H1 (cell line): ENCODE measurements at regions of chr14 and their contacts with region 1.

Region 1: GRCh38 chr14:72023722-72024407 is 91.6 kb downstream of the RGS6 start:
- DNase-seq: peak; percentile 7 to 60
- H3K4me3 ChIP-seq: no peak overlapping the region
- H3K27ac ChIP-seq: no peak overlapping the region
- H3K4me1 ChIP-seq: peaks cover 0 to 6% (median 2%) of the 10 kb centered on the region in 4 experiments; a peak in 4 of 7 replicates
- H3K27me3 ChIP-seq: no peaks in the 10 kb centered on the region
- CTCF ChIP-seq: peak in 2 of 3 experiments; percentile 58 to 73; a peak in 3 of 4 replicates
- EP300 ChIP-seq: no peak
- POLR2A ChIP-seq: no peak
- RAD21 ChIP-seq: peak; percentile 63 to 79

Region 2: DNA sequence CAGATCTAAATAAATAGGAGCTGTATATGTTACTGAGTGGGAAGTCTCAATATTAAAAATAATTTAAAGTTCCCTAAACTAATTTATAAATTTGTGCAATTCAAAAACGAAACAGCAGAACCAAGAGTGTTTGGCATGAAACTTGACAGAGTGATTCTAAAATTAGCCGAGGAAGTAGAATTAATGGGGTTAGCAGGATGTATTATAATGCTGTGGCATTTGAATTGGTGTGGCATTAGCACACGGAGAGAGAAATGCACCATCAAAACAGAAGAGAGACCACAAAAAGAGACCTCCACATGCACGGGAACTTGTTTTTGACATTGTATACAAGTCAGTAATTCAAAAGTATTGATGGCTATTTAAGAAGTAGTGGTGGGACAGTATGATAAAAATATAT is 457.6 kb before region 1 on chr14:
- CTCF ChIA-PET with region 1: no interaction called
- POLR2A ChIA-PET with region 1: no interaction called
- DNase-seq: no peak
- H3K4me3 ChIP-seq: no peak overlapping the region
- H3K27ac ChIP-seq: no peak overlapping the region
- H3K4me1 ChIP-seq: peaks cover 0 to 5% (median 2%) of the 10 kb centered on the region in 4 experiments; a peak in 3 of 7 replicates
- H3K27me3 ChIP-seq: no peaks in the 10 kb centered on the region
- CTCF ChIP-seq: no peak
- EP300 ChIP-seq: no peak
- POLR2A ChIP-seq: no peak
- RAD21 ChIP-seq: no peak

Region 3: DNA sequence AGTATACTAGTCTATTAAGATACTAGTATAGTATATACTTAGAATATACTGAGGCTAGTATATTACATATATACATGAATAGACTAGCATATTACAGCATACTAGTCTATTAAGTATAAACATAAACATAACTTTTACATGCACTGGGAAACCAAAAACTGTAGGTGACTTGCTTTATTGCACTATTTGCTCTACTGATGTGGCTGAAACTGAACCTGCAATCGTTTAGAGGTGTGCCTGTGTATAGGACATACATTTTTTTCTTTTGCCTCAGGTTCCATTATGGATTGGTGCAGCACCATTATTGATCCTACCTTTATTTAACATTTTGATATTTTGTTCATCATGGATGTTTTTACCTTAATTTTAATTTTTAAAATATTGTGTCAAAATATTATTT is 234.9 kb before region 1 on chr14:
- CTCF ChIA-PET with region 1: no interaction called
- POLR2A ChIA-PET with region 1: no interaction called
- DNase-seq: no peak
- H3K4me3 ChIP-seq: no peak overlapping the region
- H3K27ac ChIP-seq: no peak overlapping the region
- H3K4me1 ChIP-seq: no peaks in the 10 kb centered on the region
- H3K27me3 ChIP-seq: no peaks in the 10 kb centered on the region
- CTCF ChIP-seq: no peak
- EP300 ChIP-seq: no peak
- POLR2A ChIP-seq: no peak
- RAD21 ChIP-seq: no peak

Region 4: DNA sequence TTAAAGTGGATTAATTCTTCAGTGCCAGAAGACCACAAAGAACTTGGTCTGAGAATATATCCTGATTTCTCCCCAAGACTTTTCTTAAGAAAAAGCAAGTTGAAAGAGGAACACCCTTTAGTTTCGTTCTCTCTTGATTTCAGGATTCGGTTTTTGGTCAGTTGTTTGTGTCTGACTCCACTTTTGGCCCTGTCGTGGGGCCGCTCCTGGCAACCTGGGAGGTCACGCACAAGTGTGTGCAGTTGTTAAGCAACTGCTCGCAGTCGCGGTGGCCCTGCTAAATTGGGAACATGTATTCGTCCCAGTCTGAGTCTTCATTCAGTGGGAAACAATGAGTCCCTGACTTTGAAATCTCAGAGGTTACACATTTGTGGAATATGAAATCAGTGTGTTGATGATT is 23.0 kb before region 1 on chr14:
- CTCF ChIA-PET with region 1: interaction called, 15 read pairs
- POLR2A ChIA-PET with region 1: no interaction called
- DNase-seq: no peak
- H3K4me3 ChIP-seq: no peak overlapping the region
- H3K27ac ChIP-seq: no peak overlapping the region
- H3K4me1 ChIP-seq: no peaks in the 10 kb centered on the region
- H3K27me3 ChIP-seq: no peaks in the 10 kb centered on the region
- CTCF ChIP-seq: no peak
- EP300 ChIP-seq: no peak
- POLR2A ChIP-seq: no peak
- RAD21 ChIP-seq: no peak

Region 5: GRCh38 chr14:72008666-72009065 is 15.2 kb before region 1 on chr14:
- CTCF ChIA-PET with region 1: interaction called, 15 read pairs
- POLR2A ChIA-PET with region 1: no interaction called
- DNase-seq: no peak
- H3K4me3 ChIP-seq: no peak overlapping the region
- H3K27ac ChIP-seq: no peak overlapping the region
- H3K4me1 ChIP-seq: no peaks in the 10 kb centered on the region
- H3K27me3 ChIP-seq: no peaks in the 10 kb centered on the region
- CTCF ChIP-seq: no peak
- EP300 ChIP-seq: no peak
- POLR2A ChIP-seq: no peak
- RAD21 ChIP-seq: no peak

Region 6: DNA sequence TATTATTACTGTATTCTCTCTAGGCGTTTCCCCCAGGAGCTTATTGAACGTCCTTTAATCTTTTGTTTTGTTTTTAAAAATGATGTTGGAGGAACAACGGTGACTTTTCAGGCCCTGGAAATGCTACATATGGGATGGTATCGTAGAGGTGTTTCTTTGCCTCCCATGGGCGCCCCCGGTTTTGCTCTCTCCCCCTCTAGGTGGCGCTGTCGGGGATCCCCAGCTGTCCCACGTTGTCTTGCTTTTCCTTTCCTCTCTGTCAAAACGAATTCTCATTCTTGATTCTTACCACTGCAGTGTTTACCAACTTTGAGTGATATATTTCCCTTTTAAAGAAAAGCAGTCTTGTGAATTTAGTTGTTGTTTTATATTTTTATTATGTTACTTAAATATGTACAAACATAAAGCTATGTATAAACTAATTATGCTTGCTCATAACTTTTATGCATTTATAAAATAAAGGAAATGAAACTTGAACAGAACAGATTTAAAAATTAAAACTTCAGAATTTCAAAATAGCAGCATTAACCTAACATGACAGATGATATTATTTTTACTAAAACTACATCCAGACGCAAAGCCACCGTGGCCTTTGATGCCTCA is 80.2 kb after region 1 on chr14:
- CTCF ChIA-PET with region 1: interaction called, 16 read pairs
- POLR2A ChIA-PET with region 1: no interaction called
- DNase-seq: peak; percentile 21 to 89
- H3K4me3 ChIP-seq: no peak overlapping the region
- H3K27ac ChIP-seq: no peak overlapping the region
- H3K4me1 ChIP-seq: no peaks in the 10 kb centered on the region
- H3K27me3 ChIP-seq: no peaks in the 10 kb centered on the region
- CTCF ChIP-seq: peak; percentile 79 to 87 (median 81)
- EP300 ChIP-seq: no peak
- POLR2A ChIP-seq: no peak
- RAD21 ChIP-seq: peak; percentile 63 to 74

Region 7: DNA sequence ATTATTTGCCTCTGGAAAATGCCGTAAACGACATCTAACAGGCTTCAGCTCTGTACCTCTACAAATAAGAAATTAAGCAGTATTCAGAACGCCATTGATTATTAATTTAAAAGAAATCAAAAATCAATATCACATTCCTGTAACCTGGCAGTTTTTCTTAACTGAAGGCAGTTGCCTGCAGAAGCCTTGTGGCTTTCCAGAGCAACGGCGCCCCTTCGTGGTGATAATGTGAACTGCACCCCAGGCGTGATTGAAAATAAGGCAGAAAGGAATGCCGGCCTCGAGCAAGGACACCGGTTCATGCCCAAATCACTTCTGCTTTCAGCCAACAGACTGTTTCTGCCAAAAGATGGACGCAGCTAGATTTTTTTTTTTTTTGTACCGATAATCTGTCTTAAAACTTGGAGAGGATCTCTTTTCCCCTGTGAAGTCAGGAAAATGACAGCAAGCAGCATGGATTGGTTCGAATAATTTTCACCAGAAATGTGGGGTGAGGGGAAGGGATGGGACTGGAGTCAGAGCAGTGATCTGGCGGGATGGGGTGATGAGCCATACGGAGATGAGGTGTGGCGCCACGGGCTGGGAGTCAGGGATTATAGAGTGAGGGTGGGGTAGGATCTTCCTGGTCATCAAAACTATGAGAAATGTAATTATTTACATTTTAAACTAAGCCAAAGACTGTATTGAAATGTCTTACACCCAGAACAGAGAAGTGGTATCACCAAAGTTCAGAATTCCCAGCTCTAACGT is 397.0 kb after region 1 on chr14:
- CTCF ChIA-PET with region 1: interaction called, 15 read pairs
- POLR2A ChIA-PET with region 1: no interaction called
- DNase-seq: peak; percentile 69 to 99
- H3K4me3 ChIP-seq: no peak overlapping the region
- H3K27ac ChIP-seq: no peak overlapping the region
- H3K4me1 ChIP-seq: peaks cover 0 to 4% (median 0%) of the 10 kb centered on the region in 4 experiments; a peak in 1 of 7 replicates
- H3K27me3 ChIP-seq: no peaks in the 10 kb centered on the region
- CTCF ChIP-seq: peak; percentile 85 to 95 (median 88)
- EP300 ChIP-seq: no peak
- POLR2A ChIP-seq: no peak
- RAD21 ChIP-seq: peak; percentile 96 to 98